Left ventricle myocardium inferior (tissue), 1 donor: ENCODE measurements at regions of chr1 and their contacts with region 1.

Region 1: GRCh38 chr1:24409535-24409934 is 4.0 kb downstream of the STPG1 start:
- DNase-seq: no peak
- H3K4me3 ChIP-seq: no peak overlapping the region
- H3K27ac ChIP-seq: no peak overlapping the region
- H3K4me1 ChIP-seq: peaks cover 16% of the 10 kb centered on the region
- H3K27me3 ChIP-seq: no peaks in the 10 kb centered on the region
- CTCF ChIP-seq: no peak

Region 2: GRCh38 chr1:24277420-24278169 is 131.9 kb before region 1 on chr1:
- intact Hi-C with region 1: no loop called
- DNase-seq: no peak
- H3K4me3 ChIP-seq: no peak overlapping the region
- H3K27ac ChIP-seq: no peak overlapping the region
- H3K4me1 ChIP-seq: no peaks in the 10 kb centered on the region
- H3K27me3 ChIP-seq: peaks cover 42% of the 10 kb centered on the region
- CTCF ChIP-seq: no peak

Region 3: GRCh38 chr1:24502709-24503058 is 93.1 kb after region 1 on chr1 and contains the start of gene RCAN3:
- intact Hi-C with region 1: loop called (anchors 10 kb)
- DNase-seq: peak; percentile 88
- H3K4me3 ChIP-seq: peak within 1 kb of the TSS; percentile 86
- H3K27ac ChIP-seq: peak within 1 kb of the TSS; percentile 93
- H3K4me1 ChIP-seq: peaks cover 26% of the 10 kb centered on the region
- H3K27me3 ChIP-seq: no peaks in the 10 kb centered on the region
- CTCF ChIP-seq: no peak
- total RNA-seq, gene RCAN3: 4.9 TPM